CD4-positive, alpha-beta T cell (primary cell): ENCODE measurements at regions of chr5 and their contacts with region 1.

Region 1: GRCh38 chr5:62448528-62448927 is 36.0 kb downstream of the IPO11 start:
- DNase-seq: no peak
- ATAC-seq: no peak
- H3K4me3 ChIP-seq: no peak overlapping the region
- H3K4me3 Mint-ChIP-seq: no peak overlapping the region
- H3K27ac ChIP-seq: no peak overlapping the region
- H3K27ac Mint-ChIP-seq: no peak overlapping the region
- H3K4me1 ChIP-seq: no peaks in the 10 kb centered on the region
- H3K4me1 Mint-ChIP-seq: peaks cover 6% of the 10 kb centered on the region
- H3K27me3 ChIP-seq: no peaks in the 10 kb centered on the region
- H3K27me3 Mint-ChIP-seq: no peaks in the 10 kb centered on the region
- CTCF ChIP-seq: no peak

Region 2: DNA sequence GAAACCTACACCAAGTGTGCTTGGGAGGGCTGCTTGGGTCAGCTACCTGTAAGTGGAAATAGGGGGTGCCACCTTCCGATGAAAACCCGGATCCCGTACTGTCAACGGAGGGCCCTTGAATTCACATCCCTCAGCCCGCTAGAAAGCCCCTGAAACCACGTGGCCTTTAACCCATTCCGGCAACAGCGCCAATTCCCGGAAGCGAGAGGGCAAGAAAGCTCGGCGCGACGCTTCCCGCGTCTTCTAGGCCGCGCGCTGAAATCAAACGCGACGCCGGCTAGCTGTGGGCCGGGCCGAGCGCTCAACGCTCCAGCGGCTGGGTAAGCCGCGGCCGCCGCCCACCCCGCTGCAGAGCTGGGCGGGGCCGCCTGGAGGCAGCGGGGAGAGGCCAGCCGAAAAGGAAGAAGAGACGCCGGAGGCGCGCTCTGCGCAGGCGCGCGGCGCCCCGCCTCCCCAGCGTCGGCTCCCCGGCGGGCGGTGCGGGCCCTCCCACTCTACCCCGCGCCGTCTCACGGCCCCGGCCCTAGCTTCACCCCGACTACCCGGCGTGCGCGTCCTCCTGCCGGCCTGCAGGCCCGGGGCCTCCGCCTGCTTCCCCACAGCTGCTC is 142.7 kb before region 1 on chr5 and contains the start of gene KIF2A:
- CTCF ChIA-PET with region 1: no interaction called
- POLR2A ChIA-PET with region 1: no interaction called
- intact Hi-C with region 1: no loop called
- DNase-seq: peak; percentile 80 to 97 (median 90)
- ATAC-seq: peak; percentile 80
- H3K4me3 ChIP-seq: peak within 1 kb of the TSS; percentile 78
- H3K4me3 Mint-ChIP-seq: peak within 1 kb of the TSS; percentile 93
- H3K27ac ChIP-seq: peak within 1 kb of the TSS; percentile 84 to 86
- H3K27ac Mint-ChIP-seq: peak within 1 kb of the TSS; percentile 94
- H3K4me1 ChIP-seq: peaks cover 33% of the 10 kb centered on the region
- H3K4me1 Mint-ChIP-seq: peaks cover 54% of the 10 kb centered on the region
- H3K27me3 ChIP-seq: no peaks in the 10 kb centered on the region
- H3K27me3 Mint-ChIP-seq: no peaks in the 10 kb centered on the region
- CTCF ChIP-seq: no peak
- total RNA-seq, gene KIF2A: 78.4 to 81.8 TPM

Region 3: DNA sequence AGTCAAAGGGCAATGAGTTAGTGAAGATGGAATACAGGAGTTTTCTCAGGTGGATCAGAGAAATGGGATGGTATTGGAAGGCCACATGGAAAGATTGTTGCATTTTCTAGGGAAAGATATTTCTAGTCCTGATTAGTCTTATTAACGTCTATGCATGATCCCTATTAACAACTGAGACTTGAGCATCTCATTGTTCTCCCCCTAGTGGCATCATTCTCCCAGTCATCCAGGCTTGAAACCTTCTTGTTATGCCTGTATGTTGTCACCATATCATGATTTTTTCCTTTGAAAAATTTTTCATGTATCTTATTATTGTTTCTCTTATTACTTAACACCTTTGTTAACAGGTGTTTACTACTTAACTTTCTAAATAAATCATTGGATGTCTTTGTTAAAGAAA is 108.1 kb before region 1 on chr5:
- CTCF ChIA-PET with region 1: no interaction called
- POLR2A ChIA-PET with region 1: no interaction called
- intact Hi-C with region 1: no loop called
- DNase-seq: peak in 3 of 14 experiments; percentile 19 to 70 (median 56)
- ATAC-seq: peak; percentile 35
- H3K4me3 ChIP-seq: no peak overlapping the region
- H3K4me3 Mint-ChIP-seq: no peak overlapping the region
- H3K27ac ChIP-seq: peak overlapping the region in 1 of 2 donors; percentile 13
- H3K27ac Mint-ChIP-seq: peak overlapping the region; percentile 11
- H3K4me1 ChIP-seq: peaks cover 28% of the 10 kb centered on the region
- H3K4me1 Mint-ChIP-seq: peaks cover 76% of the 10 kb centered on the region
- H3K27me3 ChIP-seq: no peaks in the 10 kb centered on the region
- H3K27me3 Mint-ChIP-seq: no peaks in the 10 kb centered on the region
- CTCF ChIP-seq: peak; percentile 57

Region 4: DNA sequence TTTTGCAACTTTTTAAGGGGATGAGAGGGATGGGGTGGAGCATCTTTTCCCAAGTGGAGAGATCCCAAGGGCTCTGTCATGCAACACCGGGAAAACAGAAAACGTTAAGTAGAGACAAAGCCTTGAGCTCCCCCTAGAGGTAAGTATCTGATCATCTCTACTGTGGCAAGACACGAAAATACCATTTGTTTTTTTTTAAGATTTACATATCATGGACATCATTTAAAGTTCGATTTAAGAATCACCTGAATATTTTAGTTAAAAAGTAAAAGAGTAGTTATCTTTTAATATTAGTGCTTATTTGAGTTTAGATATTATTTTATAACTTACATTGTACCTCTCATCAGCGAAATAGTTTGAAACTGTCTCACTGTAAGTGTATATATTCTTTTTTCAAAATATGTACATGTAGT is 330.5 kb after region 1 on chr5:
- CTCF ChIA-PET with region 1: no interaction called
- POLR2A ChIA-PET with region 1: no interaction called
- intact Hi-C with region 1: loop called in 1 of 2 experiments (anchors 5 kb)
- DNase-seq: peak in 3 of 14 experiments; percentile 40 to 58 (median 53)
- ATAC-seq: no peak
- H3K4me3 ChIP-seq: no peak overlapping the region
- H3K4me3 Mint-ChIP-seq: no peak overlapping the region
- H3K27ac ChIP-seq: no peak overlapping the region
- H3K27ac Mint-ChIP-seq: no peak overlapping the region
- H3K4me1 ChIP-seq: no peaks in the 10 kb centered on the region
- H3K4me1 Mint-ChIP-seq: no peaks in the 10 kb centered on the region
- H3K27me3 ChIP-seq: no peaks in the 10 kb centered on the region
- H3K27me3 Mint-ChIP-seq: peaks cover 7% of the 10 kb centered on the region
- CTCF ChIP-seq: peak; percentile 70

Region 5: DNA sequence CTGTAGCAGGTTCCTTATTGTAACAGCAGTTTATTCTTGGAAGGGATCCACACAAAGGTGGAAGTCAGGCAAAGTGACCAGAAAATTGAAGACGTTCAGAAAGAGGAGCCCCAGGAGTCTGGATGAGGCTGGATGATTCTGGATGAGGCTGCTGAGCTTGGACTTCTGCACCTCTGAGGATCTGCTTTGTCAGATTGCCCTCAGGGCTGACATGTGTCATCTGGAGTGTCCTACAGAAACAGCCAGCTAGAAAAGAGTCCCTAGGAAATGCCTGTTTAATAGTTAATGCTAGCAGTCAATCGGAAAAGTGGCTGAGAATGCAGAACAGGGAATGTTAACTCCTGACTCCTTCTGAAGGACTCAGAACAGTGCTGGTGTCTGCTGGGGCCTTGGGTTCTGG is 366.5 kb after region 1 on chr5:
- CTCF ChIA-PET with region 1: no interaction called
- POLR2A ChIA-PET with region 1: no interaction called
- intact Hi-C with region 1: no loop called
- DNase-seq: no peak
- ATAC-seq: no peak
- H3K4me3 ChIP-seq: no peak overlapping the region
- H3K4me3 Mint-ChIP-seq: no peak overlapping the region
- H3K27ac ChIP-seq: no peak overlapping the region
- H3K27ac Mint-ChIP-seq: no peak overlapping the region
- H3K4me1 ChIP-seq: no peaks in the 10 kb centered on the region
- H3K4me1 Mint-ChIP-seq: no peaks in the 10 kb centered on the region
- H3K27me3 ChIP-seq: no peaks in the 10 kb centered on the region
- H3K27me3 Mint-ChIP-seq: peaks cover 32% of the 10 kb centered on the region
- CTCF ChIP-seq: no peak

Region 6: DNA sequence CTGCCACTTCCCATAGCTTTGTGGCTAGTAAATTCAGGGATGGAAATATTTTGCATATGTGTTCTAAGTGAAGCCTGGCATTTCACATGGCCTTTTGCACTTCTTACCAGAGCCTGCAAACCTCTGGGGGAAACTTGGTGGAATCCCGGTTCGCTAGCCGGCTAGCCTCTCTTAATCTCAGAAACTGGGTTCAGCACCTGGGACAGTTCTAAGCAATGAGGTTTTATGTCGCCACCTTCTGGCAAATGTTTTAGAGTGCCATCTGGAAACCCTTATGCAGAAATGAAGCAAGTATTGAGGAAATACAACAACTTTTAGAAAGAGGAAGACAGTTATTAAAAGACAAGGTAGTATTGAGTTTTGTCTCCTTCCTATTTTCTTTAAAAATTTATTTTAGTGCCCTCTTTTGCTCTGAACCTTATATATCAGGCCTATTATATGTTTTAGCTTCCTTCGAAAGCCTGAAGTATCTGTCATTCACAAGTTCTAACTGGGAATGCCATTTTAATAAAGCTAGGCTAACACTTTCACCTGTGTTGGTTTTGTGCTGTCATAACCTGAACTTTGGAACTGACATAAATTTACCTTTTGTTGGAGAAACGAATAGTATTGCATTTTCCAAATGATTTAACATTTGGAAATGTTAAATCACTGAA is 1514.7 kb after region 1 on chr5:
- CTCF ChIA-PET with region 1: no interaction called
- POLR2A ChIA-PET with region 1: no interaction called
- intact Hi-C with region 1: loop called in 1 of 2 experiments (anchors 10 kb)
- DNase-seq: peak in 3 of 14 experiments; percentile 5 to 12 (median 8)
- ATAC-seq: no peak
- H3K4me3 ChIP-seq: no peak overlapping the region
- H3K4me3 Mint-ChIP-seq: no peak overlapping the region
- H3K27ac ChIP-seq: no peak overlapping the region
- H3K27ac Mint-ChIP-seq: no peak overlapping the region
- H3K4me1 ChIP-seq: no peaks in the 10 kb centered on the region
- H3K4me1 Mint-ChIP-seq: no peaks in the 10 kb centered on the region
- H3K27me3 ChIP-seq: peaks cover 24 to 31% of the 10 kb centered on the region in 2 experiments
- H3K27me3 Mint-ChIP-seq: peaks cover 42% of the 10 kb centered on the region
- CTCF ChIP-seq: no peak